Left lung (tissue), 14 donors: ENCODE measurements at regions of chr9 and their contacts with region 1.

Region 1: GRCh38 chr9:111301195-111301594 is 28.8 kb downstream of the OR2K2 start:
- DNase-seq: no peak
- ATAC-seq: no peak
- H3K4me3 ChIP-seq: no peak overlapping the region
- H3K27ac ChIP-seq: no peak overlapping the region
- H3K4me1 ChIP-seq: peaks cover 0 to 10% of the 10 kb centered on the region in 2 donors
- H3K27me3 ChIP-seq: no peaks in the 10 kb centered on the region
- CTCF ChIP-seq: no peak

Region 2: DNA sequence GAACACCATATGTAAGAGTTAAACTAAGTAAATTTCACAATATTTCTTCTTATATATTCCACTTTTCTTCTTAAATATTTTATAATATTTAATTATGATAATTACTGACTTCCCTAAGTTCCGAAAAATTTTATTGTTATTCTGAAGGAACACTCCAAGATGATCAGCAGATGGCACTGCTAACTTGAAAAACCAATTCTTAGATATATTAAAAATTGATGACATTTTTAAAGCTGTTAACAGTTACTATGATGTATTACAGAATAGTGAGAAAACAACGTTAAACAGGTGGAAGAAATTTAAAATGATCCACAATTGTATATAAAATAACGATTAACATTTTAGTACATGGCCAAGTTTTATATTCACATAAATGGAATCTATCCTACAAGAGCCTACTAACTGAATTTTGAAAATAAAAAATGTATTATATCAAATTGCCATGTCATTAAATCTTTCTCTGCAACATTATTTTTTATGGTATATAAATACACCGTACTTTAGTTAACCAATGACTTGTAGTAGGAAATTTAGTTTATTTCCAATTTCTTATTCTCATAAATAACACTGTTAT is 662.7 kb before region 1 on chr9:
- intact Hi-C with region 1: loop called in 1 of 2 experiments (anchors 10 kb)
- DNase-seq: peak in 1 of 4 donors; percentile 28
- ATAC-seq: no peak
- H3K4me3 ChIP-seq: no peak overlapping the region
- H3K27ac ChIP-seq: no peak overlapping the region
- H3K4me1 ChIP-seq: no peaks in the 10 kb centered on the region
- H3K27me3 ChIP-seq: no peaks in the 10 kb centered on the region
- CTCF ChIP-seq: peak in 1 of 2 donors; percentile 36

Region 3: DNA sequence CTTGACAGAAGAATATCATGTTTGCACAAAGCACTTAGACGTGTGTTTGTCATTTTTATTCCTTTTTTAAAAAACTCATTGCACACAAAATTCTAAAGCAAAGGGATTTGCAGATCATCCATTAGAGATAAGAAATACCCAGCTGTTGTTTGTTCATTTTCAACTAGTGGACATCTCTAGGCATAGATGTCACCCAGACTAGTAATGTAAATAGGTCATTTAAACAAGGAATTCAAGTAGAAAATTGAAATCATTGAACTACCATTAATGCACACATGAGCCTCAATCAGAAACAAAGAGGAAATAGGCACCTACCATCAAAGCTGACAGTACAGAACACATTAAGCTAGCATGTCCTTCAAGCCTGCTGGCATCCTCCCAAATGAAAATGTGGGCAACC is 78.4 kb before region 1 on chr9:
- intact Hi-C with region 1: no loop called
- DNase-seq: no peak
- ATAC-seq: no peak
- H3K4me3 ChIP-seq: no peak overlapping the region
- H3K27ac ChIP-seq: no peak overlapping the region
- H3K4me1 ChIP-seq: no peaks in the 10 kb centered on the region
- H3K27me3 ChIP-seq: no peaks in the 10 kb centered on the region
- CTCF ChIP-seq: no peak

Region 4: GRCh38 chr9:111483862-111484571 is 182.8 kb after region 1 on chr9 and contains the start of gene ECPAS:
- intact Hi-C with region 1: no loop called
- DNase-seq: peak; percentile 71 to 93 (median 81)
- ATAC-seq: peak; percentile 83
- H3K4me3 ChIP-seq: peak within 1 kb of the TSS; percentile 78 to 87
- H3K27ac ChIP-seq: peak within 1 kb of the TSS; percentile 97
- H3K4me1 ChIP-seq: peaks cover 5 to 34% of the 10 kb centered on the region in 2 donors
- H3K27me3 ChIP-seq: no peaks in the 10 kb centered on the region
- CTCF ChIP-seq: no peak
- polyA plus RNA-seq, gene ECPAS: 80.4 to 102 (median 87.8) TPM